PC-9 (cell line): ENCODE measurements at regions of chr2 and their contacts with region 1.

Region 1: DNA sequence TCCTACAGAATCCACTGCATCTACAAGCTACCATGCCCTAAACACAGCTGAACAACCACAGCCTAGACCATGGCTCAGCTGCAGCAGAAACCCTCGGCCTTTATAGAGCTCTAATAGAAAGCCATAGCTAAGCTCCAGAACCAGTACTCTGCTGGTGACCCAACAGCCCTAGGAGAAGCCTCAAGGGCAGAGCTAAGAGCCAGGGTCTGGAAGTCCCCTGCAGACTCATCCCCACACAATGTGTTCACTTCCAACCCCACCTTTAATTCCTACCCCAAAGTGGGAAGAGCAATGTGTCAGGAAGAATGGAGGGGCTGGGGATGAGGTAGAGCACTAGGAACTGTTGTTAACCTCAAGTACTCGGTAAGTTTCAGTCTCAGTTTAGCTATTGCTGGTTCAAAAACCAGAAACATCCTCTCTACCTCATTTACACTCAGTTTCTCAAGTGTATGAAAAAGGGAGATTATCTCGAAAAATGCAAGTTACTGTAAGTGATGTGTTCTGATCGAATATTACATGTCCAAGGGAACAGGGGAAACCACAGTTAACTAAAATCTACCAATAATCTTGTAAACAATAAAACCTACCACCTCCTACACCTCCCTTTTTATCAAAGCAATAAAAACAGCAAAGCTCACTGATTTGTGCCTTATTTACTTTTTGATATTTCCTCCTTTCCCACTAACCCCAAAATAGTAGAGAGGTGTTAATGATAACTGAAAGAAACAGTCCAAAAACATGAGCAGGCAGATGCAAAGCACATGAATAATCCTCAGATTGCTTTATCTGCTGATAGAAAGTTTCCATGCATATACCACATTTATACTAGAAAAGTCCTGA is 36.2 kb downstream of the THADA start:
- DNase-seq: no peak
- H3K4me3 ChIP-seq: no peak overlapping the region
- H3K27ac ChIP-seq: no peak overlapping the region
- H3K4me1 ChIP-seq: no peaks in the 10 kb centered on the region
- H3K27me3 ChIP-seq: no peaks in the 10 kb centered on the region
- CTCF ChIP-seq: no peak

Region 2: DNA sequence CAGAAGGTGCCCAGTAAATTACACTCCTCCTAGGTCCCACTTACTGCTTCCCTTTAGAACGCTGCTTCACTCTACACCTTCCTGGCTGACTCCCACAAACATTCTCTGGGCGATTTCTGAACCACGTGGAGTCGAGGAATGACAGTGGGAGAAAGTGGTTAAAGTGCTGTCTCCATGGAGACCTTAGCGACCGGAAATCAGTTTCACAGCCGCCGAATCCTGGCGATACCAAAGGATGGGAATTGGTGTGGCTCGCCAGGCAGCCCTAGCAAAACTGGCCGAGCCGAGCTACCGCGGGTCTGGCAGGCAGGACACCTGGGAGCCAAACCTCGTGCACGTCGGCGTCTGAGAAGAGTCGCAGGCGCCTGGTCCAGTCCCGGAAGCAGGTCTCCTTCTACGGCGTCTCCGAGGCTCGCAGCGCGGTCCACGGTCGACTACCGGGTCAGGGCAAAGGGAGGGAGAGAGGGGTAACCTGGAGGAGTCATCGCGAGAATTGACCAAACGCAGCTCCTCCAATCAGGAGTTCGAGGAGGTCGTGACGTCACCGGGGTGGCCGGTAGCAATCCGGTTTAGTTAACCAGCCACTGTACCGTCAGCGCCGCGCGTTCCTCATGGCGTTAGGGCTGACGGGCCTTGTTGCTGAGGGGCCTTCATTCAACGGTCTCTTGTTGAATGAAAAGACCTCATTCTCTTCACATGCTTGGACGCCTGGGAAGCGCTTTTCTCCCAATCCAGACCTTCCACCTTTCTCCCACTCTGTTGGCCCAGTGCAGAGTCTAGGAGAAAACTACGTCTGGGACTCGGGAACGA is 36.2 kb after region 1 on chr2 and contains the start of gene THADA:
- CTCF ChIA-PET with region 1: no interaction called
- POLR2A ChIA-PET with region 1: interaction called, 16 read pairs
- intact Hi-C with region 1: no loop called
- DNase-seq: peak; percentile 98 to 99
- H3K4me3 ChIP-seq: peak within 1 kb of the TSS; percentile 85
- H3K27ac ChIP-seq: peak within 1 kb of the TSS; percentile 87
- H3K4me1 ChIP-seq: peaks cover 12% of the 10 kb centered on the region
- H3K27me3 ChIP-seq: no peaks in the 10 kb centered on the region
- CTCF ChIP-seq: no peak
- total RNA-seq, gene THADA: 28.1 and 30.5 TPM in 2 replicates